Colonic mucosa (tissue), 4 donors: ENCODE measurements at regions of chr1 and their contacts with region 1.

Region 1: GRCh38 chr1:186315570-186315969 is 59.5 kb downstream of the TPR start:
- DNase-seq: no peak
- H3K4me3 ChIP-seq: no peak overlapping the region
- H3K27ac ChIP-seq: no peak overlapping the region
- H3K4me1 ChIP-seq: no peaks in the 10 kb centered on the region
- H3K27me3 ChIP-seq: no peaks in the 10 kb centered on the region
- CTCF ChIP-seq: no peak

Region 2: DNA sequence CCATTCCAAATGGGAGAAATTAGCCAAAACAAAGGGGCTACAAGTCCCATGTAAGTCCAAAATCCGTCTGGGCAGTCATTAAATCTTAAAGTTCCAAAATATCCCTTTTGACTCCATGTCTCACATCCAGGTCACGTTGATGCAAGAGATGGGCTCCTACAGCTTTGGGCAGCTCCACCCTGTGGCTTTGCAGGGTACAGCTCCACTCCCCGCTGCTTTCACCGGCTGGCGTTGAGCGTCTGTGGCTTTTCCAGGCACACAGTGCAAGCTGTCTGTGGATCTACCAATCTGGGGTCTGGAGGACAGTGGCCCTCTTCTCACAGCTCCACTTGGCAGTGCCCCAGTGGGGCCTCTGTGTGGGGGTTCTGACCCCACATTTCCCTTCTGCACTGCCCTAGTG is 70.7 kb before region 1 on chr1:
- intact Hi-C with region 1: no loop called
- DNase-seq: no peak
- H3K4me3 ChIP-seq: no peak overlapping the region
- H3K27ac ChIP-seq: no peak overlapping the region
- H3K4me1 ChIP-seq: no peaks in the 10 kb centered on the region
- H3K27me3 ChIP-seq: no peaks in the 10 kb centered on the region
- CTCF ChIP-seq: no peak

Region 3: DNA sequence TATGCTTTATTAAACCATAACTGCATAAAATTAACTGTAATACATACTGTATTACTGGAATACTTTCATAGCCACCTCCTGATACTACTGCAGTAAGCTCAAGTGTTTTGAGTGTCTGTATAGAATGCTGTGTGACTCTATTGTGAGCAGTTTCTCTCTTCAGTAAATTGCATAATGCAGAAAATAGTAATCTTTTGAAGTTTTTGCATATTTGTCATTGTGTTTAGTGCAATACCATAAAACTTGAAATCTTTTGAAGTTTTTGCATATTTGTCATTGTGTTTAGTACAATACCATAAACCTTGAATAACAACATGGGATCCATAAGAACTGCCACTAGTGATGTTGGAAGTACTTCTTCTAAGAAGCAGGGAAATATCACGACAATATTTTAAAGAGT is 48.3 kb after region 1 on chr1:
- intact Hi-C with region 1: loop called (anchors 5 kb)
- DNase-seq: no peak
- H3K4me3 ChIP-seq: no peak overlapping the region
- H3K27ac ChIP-seq: no peak overlapping the region
- H3K4me1 ChIP-seq: no peaks in the 10 kb centered on the region
- H3K27me3 ChIP-seq: no peaks in the 10 kb centered on the region
- CTCF ChIP-seq: no peak